ENCODE measurements at regions of chr19 and their contacts with region 1.

Region 1: DNA sequence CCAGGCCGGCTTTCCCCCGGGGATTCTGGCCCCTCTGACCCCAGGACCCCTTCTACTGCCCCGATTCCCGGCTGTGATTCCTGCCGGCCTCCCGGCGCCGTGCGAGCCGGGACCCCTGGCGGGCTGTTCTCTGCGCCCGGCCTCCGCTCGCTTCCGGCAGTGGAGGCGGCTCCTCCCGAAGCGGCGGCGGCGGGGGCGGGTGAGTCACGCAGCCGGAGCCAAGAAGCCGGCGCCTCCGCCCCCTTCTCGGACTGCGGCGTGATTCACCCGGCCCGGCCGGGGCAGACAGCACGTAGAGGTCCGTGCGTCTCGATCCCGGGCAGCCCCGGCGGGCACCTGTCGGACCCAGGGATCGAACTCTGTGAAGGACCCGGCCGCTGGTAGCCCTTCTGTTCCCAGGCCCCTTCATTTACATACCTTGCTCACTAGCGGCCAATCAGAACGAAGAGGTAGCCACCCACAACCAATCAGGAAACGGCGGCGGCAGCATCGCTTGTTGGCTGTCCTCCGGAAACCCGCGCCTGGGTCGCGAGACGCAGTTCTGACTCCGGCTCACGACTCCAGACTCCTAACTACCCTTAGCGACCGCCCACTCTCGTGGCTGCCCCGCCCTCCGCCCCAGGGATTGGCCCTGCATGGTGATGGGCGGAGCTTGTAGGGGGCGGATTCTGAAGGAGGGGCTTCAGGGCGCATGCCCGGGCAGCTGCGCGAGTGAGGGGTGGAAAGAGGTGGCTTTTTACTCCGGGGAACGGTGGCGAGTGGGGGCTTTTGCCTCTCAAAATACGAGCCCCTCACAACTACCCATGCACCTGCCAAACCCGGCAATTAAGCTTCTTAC is at the start of gene SERTAD1:
- DNase-seq: peak; percentile 100
- H3K4me3 ChIP-seq: peak within 1 kb of the TSS; percentile 66 to 96 (median 86)
- H3K27ac ChIP-seq: peak within 1 kb of the TSS; percentile 67 to 99 (median 97)
- H3K27me3 ChIP-seq: no peaks in the 10 kb centered on the region
- CTCF ChIP-seq: peak in 54 of 56 donors; percentile 55 to 94 (median 80)
- total RNA-seq, gene SERTAD1: 2.3 to 23.0 (median 5.5) TPM

Region 2: GRCh38 chr19:40305403-40305802 is 120.3 kb before region 1 on chr19:
- intact Hi-C with region 1: loop called in 1 of 2 experiments (anchors 2 kb)
- DNase-seq: peak in 9 of 10 donors; percentile 64 to 80 (median 76)
- H3K4me3 ChIP-seq: peak overlapping the region in 2 of 59 donors; percentile 16 to 41
- H3K27ac ChIP-seq: peak overlapping the region in 1 of 59 donors; percentile 17
- H3K27me3 ChIP-seq: no peaks in the 10 kb centered on the region
- CTCF ChIP-seq: peak; percentile 65 to 94 (median 84)

Region 3: DNA sequence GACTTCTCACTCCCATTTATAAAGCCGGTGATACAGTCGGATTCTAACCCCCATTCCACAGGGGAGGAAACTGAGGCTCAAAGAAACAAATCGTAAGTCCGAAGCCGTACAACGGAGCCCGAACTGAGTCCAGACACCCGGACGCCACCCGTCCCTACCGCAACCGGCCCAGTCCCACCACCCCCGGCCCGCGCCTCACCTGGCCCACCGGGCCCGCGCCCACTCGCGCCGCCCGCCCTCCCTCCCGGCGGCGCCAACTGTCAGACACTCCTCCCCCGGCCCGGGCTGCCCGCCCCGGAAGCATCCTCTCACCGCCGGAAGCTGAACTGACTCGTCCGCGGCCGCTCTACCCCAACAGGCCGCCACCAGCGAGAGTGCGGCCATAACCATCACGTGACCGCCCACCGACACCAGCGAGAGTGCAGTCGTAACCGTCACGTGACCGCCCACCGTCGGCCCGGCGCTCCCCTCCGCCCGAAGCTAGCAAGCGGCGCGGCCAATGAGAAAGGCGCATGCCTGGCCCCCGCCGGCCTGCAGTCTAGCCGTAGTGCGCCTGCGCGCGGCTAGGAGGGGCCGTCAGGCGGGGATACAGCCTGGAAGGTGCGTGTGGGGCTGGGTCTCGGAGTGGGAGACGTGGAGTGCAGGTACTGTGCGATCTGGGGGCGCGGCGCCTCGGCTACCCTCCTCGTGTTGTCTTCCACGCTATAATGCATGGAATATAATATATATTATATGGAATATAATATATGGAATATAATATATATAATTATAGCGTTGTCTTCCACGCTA is 77.3 kb before region 1 on chr19 and contains the starts of genes C19orf47 and PLD3:
- intact Hi-C with region 1: loop called in 1 of 2 experiments (anchors 5 kb)
- DNase-seq: peak; percentile 99 to 100 (median 100)
- H3K4me3 ChIP-seq: peak within 1 kb of the TSS; percentile 55 to 98 (median 86)
- H3K27ac ChIP-seq: peak within 1 kb of the TSS in 58 of 59 donors; percentile 4 to 95 (median 84)
- H3K27me3 ChIP-seq: no peaks in the 10 kb centered on the region
- CTCF ChIP-seq: peak in 26 of 56 donors; percentile 6 to 54 (median 29)
- total RNA-seq, gene C19orf47: 26.8 to 54.6 (median 37.4) TPM
- total RNA-seq, gene PLD3: 322 to 718 (median 553) TPM

Region 4: GRCh38 chr19:40444192-40445028 is 18.7 kb after region 1 on chr19 and contains the start of gene SERTAD3:
- intact Hi-C with region 1: loop called (anchors 1 kb)
- DNase-seq: peak; percentile 93 to 99 (median 95)
- H3K4me3 ChIP-seq: peak within 1 kb of the TSS; percentile 50 to 94 (median 83)
- H3K27ac ChIP-seq: peak within 1 kb of the TSS; percentile 82 to 99 (median 97)
- H3K27me3 ChIP-seq: no peaks in the 10 kb centered on the region
- CTCF ChIP-seq: peak in 36 of 56 donors; percentile 5 to 54 (median 24)
- total RNA-seq, gene SERTAD3: 3.5 to 29.8 (median 9.8) TPM

Region 5: GRCh38 chr19:40465557-40466150 is 40.0 kb after region 1 on chr19 and contains the start of gene BLVRB:
- intact Hi-C with region 1: loop called (anchors 2 kb)
- DNase-seq: peak; percentile 99 to 100 (median 100)
- H3K4me3 ChIP-seq: peak within 1 kb of the TSS; percentile 41 to 97 (median 78)
- H3K27ac ChIP-seq: peak within 1 kb of the TSS; percentile 26 to 95 (median 81)
- H3K27me3 ChIP-seq: no peaks in the 10 kb centered on the region
- CTCF ChIP-seq: peak in 31 of 56 donors; percentile 8 to 64 (median 29)
- total RNA-seq, gene BLVRB: 22.5 to 59.4 (median 36.1) TPM

Region 6: DNA sequence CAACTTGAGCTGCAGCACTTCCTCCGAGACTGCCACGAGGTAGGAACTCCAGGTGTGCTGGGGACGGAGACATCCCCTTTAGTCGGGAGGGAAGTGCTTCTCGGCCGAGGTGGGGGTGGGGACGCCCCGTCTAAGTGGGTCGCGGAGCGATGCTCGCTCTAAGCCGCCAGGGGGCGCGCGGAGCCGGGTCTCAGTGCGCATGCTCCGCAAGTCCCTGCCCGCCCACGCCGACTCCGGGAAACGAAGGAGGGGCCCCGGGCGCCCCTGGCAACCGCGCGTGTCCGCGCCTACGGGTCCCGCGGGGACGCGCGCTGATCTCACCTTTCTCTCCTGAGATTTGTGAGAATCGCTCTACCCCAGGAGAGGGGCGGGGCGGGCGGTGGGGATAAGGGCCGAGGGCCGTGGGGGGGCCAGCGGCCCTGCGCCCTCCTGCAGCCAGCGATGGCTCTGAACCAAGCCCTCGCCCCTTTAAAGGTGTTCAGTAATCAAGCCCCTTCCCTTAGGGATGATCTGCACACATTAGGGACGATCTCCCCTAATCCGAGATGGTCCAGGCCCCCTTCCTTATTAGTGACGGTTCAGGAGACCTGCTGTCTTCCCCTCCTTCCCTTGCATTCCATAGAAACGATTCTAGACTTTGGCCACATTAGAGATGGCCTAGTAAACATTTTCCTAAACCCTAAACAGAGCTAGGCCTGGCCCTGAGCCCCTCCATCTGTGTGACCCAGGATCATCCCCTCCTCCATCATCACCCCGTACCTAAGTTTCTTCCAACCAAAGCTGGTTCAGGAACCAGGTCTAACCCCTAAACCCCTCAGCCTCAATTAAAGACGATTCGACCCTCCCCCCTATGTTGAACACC is 103.7 kb after region 1 on chr19:
- intact Hi-C with region 1: loop called in 1 of 2 experiments (anchors 2 kb)
- DNase-seq: peak; percentile 65 to 91 (median 86)
- H3K4me3 ChIP-seq: peak overlapping the region; percentile 31 to 78 (median 62)
- H3K27ac ChIP-seq: peak overlapping the region in 57 of 59 donors; percentile 2 to 96 (median 80)
- H3K27me3 ChIP-seq: no peaks in the 10 kb centered on the region
- CTCF ChIP-seq: peak; percentile 87 to 99 (median 97)

Region 7: DNA sequence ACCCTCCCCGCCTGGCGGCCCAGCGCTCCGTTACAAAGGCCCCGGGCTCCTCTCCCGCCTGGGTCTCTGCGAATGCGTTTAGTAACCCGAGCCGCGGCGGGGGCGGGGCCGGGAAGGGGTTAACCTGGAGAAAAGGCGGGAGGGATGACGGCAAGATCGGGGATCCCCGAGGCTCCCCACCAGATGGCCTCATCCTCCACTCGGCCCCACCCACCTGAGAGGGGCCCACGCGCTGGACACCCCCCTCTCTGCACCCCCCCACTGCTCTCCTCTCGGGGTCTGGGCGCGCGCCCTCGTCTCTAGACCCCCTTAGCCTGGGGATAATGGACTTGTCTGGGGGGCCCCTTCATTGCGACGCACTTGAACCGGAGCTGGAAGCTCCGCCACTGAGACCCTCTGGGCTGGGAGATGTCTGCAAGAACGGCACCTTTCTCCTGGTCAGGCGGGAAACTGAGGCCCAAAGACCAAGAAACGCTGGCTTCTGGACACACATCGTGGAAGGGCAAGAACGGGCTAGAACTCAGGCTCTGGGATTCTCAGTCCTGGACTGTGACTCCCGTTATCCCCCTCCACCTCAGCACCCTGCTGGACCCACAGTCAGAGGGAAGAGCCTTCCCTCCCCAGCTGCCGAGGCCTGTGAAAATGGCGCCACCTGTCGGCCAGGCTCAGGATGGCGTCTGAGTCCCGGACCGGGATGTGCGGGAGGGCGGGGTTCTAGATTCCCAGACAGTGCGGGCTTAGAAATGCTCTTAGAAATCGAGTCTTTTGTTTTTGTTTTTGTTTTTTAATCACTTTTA is 172.7 kb after region 1 on chr19:
- intact Hi-C with region 1: loop called in 1 of 2 experiments (anchors 5 kb)
- DNase-seq: peak; percentile 80 to 92 (median 87)
- H3K4me3 ChIP-seq: peak overlapping the region in 41 of 59 donors; percentile 1 to 52 (median 26)
- H3K27ac ChIP-seq: no peak overlapping the region
- H3K27me3 ChIP-seq: peaks cover 0 to 15% (median 0%) of the 10 kb centered on the region in 45 donors
- CTCF ChIP-seq: peak; percentile 82 to 100 (median 98)

Measured in dorsolateral prefrontal cortex (tissue), 120 donors.